Sigmoid colon (tissue), 7 donors: ENCODE measurements at regions of chr2 and their contacts with region 1.

Region 1: GRCh38 chr2:96554293-96555145 is 18.0 kb downstream of the ARID5A start:
- DNase-seq: peak; percentile 91
- H3K4me3 ChIP-seq: peak overlapping the region in 2 of 4 donors; percentile 8 to 10
- H3K27ac ChIP-seq: peak overlapping the region in 2 of 4 donors; percentile 32 to 53
- H3K4me1 ChIP-seq: peaks cover 0 to 12% (median 10%) of the 10 kb centered on the region in 4 donors
- H3K27me3 ChIP-seq: no peaks in the 10 kb centered on the region
- CTCF ChIP-seq: peak; percentile 70 to 99 (median 92)
- EP300 ChIP-seq: no peak
- POLR2A ChIP-seq: no peak

Region 2: GRCh38 chr2:96353032-96353561 is 201.4 kb before region 1 on chr2:
- intact Hi-C with region 1: no loop called
- DNase-seq: no peak
- H3K4me3 ChIP-seq: no peak overlapping the region
- H3K27ac ChIP-seq: peak overlapping the region in 2 of 4 donors; percentile 18 to 54
- H3K4me1 ChIP-seq: no peaks in the 10 kb centered on the region
- H3K27me3 ChIP-seq: no peaks in the 10 kb centered on the region
- CTCF ChIP-seq: no peak
- EP300 ChIP-seq: no peak
- POLR2A ChIP-seq: no peak

Region 3: GRCh38 chr2:96407041-96407918 is 147.2 kb before region 1 on chr2:
- intact Hi-C with region 1: loop called (anchors 2 kb)
- DNase-seq: peak; percentile 82
- H3K4me3 ChIP-seq: no peak overlapping the region
- H3K27ac ChIP-seq: peak overlapping the region in 1 of 4 donors; percentile 20
- H3K4me1 ChIP-seq: peaks cover 0 to 9% (median 8%) of the 10 kb centered on the region in 4 donors
- H3K27me3 ChIP-seq: no peaks in the 10 kb centered on the region
- CTCF ChIP-seq: peak; percentile 65 to 81 (median 77)
- EP300 ChIP-seq: no peak
- POLR2A ChIP-seq: no peak

Region 4: GRCh38 chr2:96527286-96528005 is 27.1 kb before region 1 on chr2:
- intact Hi-C with region 1: loop called (anchors 2 kb)
- DNase-seq: peak; percentile 69
- H3K4me3 ChIP-seq: peak overlapping the region; percentile 46 to 71 (median 64)
- H3K27ac ChIP-seq: peak overlapping the region; percentile 80 to 99 (median 84)
- H3K4me1 ChIP-seq: peaks cover 0 to 43% (median 31%) of the 10 kb centered on the region in 4 donors
- H3K27me3 ChIP-seq: no peaks in the 10 kb centered on the region
- CTCF ChIP-seq: peak in 1 of 4 experiments; percentile 42
- EP300 ChIP-seq: no peak
- POLR2A ChIP-seq: no peak